ENCODE measurements at regions of chr14 and their contacts with region 1.

Region 1: DNA sequence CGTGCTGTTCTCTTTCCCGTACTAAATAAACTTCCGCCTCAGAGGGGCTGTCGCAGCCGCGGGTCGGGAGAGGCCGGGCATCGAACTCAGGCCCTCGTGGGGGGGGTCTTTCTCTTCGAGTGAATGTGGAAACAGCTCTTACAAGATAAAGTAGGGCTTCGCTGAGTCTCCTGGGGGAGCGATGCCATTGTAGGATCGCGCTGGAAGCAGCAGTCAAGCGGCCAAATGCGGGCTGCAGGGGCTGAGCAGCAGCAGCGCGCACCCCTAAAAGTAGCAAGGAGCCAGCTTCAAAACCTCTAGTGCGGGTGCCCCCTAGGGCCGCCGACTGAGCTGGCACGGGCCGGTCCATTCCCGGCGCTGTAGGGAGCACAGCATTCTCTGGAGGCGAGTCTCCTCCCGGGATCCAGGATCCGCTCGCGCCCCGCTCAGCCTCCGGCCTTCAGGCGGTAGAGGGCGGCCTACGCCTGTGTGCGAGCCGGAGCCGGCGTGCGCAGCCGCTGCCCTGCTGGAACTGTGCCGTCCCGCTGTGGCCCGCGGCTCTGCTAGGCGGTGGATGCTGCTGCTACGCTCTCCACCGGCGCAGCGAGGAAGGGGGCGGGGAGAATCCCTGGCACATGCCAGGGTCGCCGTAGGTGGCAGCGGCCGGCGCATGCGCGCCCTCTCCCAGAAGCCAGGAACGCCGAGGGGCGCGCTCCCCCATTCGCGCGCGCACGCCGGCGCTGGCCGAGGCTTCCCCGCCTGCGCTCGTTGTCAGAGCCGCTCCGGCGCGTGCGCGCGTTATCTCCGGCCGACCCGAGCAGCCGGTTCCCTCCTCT is at the start of gene FUT8:
- DNase-seq: peak; percentile 94
- H3K4me3 Mint-ChIP-seq: peak within 1 kb of the TSS; percentile 92
- H3K27ac Mint-ChIP-seq: peak within 1 kb of the TSS; percentile 95
- H3K4me1 Mint-ChIP-seq: peaks cover 32% of the 10 kb centered on the region
- H3K27me3 Mint-ChIP-seq: no peaks in the 10 kb centered on the region
- total RNA-seq, gene FUT8: 34.6 to 38.7 TPM

Region 2: GRCh38 chr14:65003394-65003793 is 408.8 kb before region 1 on chr14:
- CTCF ChIA-PET with region 1: no interaction called
- intact Hi-C with region 1: no loop called
- DNase-seq: no peak
- H3K4me3 Mint-ChIP-seq: no peak overlapping the region
- H3K27ac Mint-ChIP-seq: no peak overlapping the region
- H3K4me1 Mint-ChIP-seq: peaks cover 30% of the 10 kb centered on the region
- H3K27me3 Mint-ChIP-seq: no peaks in the 10 kb centered on the region

Region 3: DNA sequence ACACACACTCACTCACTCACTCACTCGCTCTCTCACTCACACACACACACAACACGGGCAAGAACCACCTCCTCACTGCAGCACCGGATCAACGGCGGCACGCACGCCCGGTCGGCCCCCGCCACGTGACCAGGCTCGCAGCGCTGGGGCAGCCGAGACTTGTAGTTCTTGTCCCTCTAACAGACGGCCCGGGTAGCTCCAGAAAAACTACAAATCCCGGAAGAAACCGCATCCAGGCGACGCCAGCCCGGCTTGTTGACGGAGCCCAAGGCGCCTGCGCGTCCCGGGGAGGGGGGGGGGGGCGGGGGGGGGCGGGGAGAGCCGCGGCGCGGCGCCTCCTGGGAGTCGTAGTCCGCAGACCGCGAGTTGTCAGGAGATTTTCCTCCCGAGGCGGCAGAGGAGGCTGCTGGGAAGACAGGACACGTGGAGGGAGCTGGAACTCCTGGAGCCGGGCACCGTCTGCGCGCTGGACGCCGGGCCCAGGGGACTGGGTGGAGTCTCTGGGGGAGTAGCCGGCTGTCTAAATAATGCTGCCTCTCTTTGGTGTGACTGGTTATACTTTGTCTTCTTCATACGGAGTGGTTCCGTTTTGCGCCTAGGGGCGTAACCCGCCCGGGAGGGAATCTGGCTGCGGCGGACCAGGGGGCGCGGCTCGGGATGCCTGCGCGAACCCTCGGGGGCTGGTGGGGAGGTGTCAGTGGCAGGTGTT is 309.6 kb before region 1 on chr14 and contains the start of gene MAX:
- CTCF ChIA-PET with region 1: no interaction called
- intact Hi-C with region 1: loop called (anchors 1 kb)
- DNase-seq: peak; percentile 99
- H3K4me3 Mint-ChIP-seq: peak within 1 kb of the TSS; percentile 87
- H3K27ac Mint-ChIP-seq: peak within 1 kb of the TSS; percentile 91
- H3K4me1 Mint-ChIP-seq: peaks cover 30% of the 10 kb centered on the region
- H3K27me3 Mint-ChIP-seq: no peaks in the 10 kb centered on the region
- total RNA-seq, gene MAX: 67.9 to 75.1 TPM

Region 4: GRCh38 chr14:65222440-65222858 is 189.8 kb before region 1 on chr14:
- CTCF ChIA-PET with region 1: interaction called, 6 read pairs
- intact Hi-C with region 1: loop called (anchors 1 kb)
- DNase-seq: peak; percentile 74
- H3K4me3 Mint-ChIP-seq: no peak overlapping the region
- H3K27ac Mint-ChIP-seq: no peak overlapping the region
- H3K4me1 Mint-ChIP-seq: peaks cover 28% of the 10 kb centered on the region
- H3K27me3 Mint-ChIP-seq: no peaks in the 10 kb centered on the region

Region 5: GRCh38 chr14:65302571-65303189 is 109.6 kb before region 1 on chr14:
- CTCF ChIA-PET with region 1: interaction called, 6 read pairs
- intact Hi-C with region 1: loop called (anchors 1 kb)
- DNase-seq: peak; percentile 82
- H3K4me3 Mint-ChIP-seq: peak overlapping the region; percentile 23
- H3K27ac Mint-ChIP-seq: peak overlapping the region; percentile 95
- H3K4me1 Mint-ChIP-seq: peaks cover 61% of the 10 kb centered on the region
- H3K27me3 Mint-ChIP-seq: no peaks in the 10 kb centered on the region

Region 6: GRCh38 chr14:65483647-65484046 is 71.4 kb after region 1 on chr14:
- CTCF ChIA-PET with region 1: interaction called, 13 read pairs
- intact Hi-C with region 1: loop called (anchors 5 kb)
- DNase-seq: no peak
- H3K4me3 Mint-ChIP-seq: no peak overlapping the region
- H3K27ac Mint-ChIP-seq: no peak overlapping the region
- H3K4me1 Mint-ChIP-seq: peaks cover 49% of the 10 kb centered on the region
- H3K27me3 Mint-ChIP-seq: no peaks in the 10 kb centered on the region

Region 7: DNA sequence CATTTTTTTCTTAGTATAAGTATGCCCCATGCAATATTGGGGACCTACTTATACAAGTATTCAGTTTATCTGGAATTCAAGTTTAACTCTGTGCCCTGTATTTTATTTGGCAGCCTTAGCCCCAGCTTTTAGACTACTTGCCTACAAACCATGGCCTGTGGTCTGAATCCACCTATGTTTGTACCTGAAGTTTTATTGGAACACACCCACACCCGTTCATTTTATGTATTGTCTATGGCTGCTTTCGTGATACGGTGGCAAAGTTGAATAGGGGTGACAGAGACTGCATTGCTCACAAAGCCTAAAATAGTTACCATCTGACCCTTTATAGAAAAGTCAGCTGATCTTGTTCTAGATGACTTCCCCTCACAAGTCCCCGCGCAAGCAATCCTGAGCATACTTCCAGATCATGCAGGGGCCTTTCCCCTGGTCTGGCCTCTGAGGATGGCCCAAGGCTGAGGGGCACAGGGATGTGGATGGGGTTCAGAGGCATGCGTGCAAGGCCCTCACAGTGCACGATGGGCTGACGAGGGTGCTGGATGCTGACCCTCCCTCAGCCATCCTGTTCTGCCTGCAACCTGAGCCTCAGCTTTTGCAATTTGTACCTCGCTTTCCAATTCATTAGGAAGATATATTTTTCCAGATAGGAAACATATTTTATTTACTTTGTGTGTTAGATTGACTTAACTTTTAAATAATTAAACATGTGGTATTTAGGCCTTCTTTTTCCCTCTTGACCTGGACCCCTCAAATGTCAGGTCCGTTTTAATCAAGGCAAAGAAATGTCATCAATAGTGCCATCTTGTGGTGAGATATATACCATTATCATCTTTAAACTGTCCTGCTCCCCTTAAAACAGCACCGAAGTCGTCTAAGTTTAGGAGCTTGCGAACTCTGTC is 546.7 kb after region 1 on chr14:
- CTCF ChIA-PET with region 1: interaction called, 33 read pairs
- intact Hi-C with region 1: loop called (anchors 1 kb)
- DNase-seq: no peak
- H3K4me3 Mint-ChIP-seq: no peak overlapping the region
- H3K27ac Mint-ChIP-seq: no peak overlapping the region
- H3K4me1 Mint-ChIP-seq: peaks cover 13% of the 10 kb centered on the region
- H3K27me3 Mint-ChIP-seq: no peaks in the 10 kb centered on the region

Region 8: DNA sequence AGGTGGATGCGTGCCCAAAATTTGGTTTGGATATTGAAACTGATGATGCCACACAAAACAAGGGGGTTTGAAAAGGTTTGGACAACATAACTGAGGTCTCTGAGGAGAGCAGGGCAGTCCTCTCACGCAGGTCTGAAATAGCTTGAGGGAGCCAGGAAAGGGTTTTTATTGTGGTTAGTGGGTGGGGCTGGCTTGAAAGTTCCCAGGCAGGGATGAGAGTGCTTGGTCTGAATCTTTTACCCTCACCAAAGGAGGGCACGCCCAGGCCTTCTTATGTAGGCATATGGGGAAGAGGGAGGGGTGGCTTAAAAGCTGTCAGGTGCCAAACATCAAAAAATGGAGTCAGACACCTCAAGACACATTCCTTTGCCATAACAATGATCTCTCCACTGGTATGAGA is 580.9 kb after region 1 on chr14:
- CTCF ChIA-PET with region 1: no interaction called
- intact Hi-C with region 1: no loop called
- DNase-seq: peak; percentile 9
- H3K4me3 Mint-ChIP-seq: no peak overlapping the region
- H3K27ac Mint-ChIP-seq: no peak overlapping the region
- H3K4me1 Mint-ChIP-seq: peaks cover 22% of the 10 kb centered on the region
- H3K27me3 Mint-ChIP-seq: no peaks in the 10 kb centered on the region

Measured in activated naive CD4-positive, alpha-beta T cell treated with anti-CD3 and anti-CD28 coated beads for 36 hours (primary cell).